ENCODE measurements at regions of chr2 and their contacts with region 1.

Region 1: DNA sequence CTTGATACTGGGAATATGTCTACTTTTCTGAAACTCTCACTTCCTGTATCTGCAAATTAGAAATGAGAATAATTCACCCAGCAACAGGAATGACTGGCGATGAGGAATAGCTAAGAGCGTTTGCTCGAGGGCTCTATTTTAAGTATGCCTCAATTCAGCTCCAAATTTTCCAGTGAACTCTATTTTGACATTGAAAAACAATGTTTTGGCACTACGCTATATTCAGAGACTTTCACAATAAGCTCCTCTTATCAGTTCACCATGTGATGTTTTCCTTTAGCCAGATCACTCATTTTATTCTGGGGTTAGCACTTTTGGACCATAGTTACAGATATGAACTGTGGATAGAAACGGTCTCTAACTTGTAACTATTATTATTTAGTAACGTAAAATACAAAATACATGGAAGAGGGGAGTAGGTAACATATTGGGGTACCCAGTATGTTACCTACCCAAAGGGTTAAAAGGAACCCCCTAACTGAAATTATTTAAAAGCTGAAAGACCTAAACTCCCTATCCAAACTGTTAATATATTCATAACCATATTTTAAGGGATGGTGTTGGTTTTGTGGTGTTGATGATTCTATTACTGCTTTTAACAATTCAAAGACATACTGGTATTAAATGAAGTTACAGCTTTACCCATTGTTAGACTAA is 28.1 kb downstream of the SLC40A1 start:
- DNase-seq: no peak
- H3K4me3 Mint-ChIP-seq: no peak overlapping the region
- H3K27ac Mint-ChIP-seq: no peak overlapping the region
- H3K4me1 Mint-ChIP-seq: peaks cover 58% of the 10 kb centered on the region
- H3K27me3 Mint-ChIP-seq: no peaks in the 10 kb centered on the region
- CTCF ChIP-seq: no peak

Region 2: DNA sequence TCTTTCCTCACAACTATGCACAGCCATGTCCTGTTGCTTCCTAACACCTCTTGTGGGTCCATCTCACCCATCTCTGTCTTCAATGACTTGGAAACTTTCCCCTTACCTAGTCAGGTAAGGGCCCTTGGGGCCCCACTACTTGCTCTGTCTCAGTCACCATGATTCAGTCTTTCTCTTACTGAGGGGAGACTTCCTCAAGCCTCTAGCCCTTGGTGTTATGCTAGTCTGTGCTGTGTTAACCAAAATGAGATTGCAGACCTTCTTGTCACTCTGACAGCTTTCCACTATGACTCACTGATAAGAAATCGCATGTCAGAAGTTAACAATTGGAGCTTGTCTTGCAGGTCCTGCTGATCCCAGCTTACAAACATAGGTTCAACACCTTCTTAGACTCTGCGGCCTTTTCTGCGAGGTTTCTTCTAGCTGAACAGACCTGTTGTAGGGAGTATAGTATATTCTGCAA is 45.9 kb before region 1 on chr2:
- CTCF ChIA-PET with region 1: no interaction called
- intact Hi-C with region 1: loop called (anchors 2 kb)
- DNase-seq: peak; percentile 36
- H3K4me3 Mint-ChIP-seq: no peak overlapping the region
- H3K27ac Mint-ChIP-seq: peak overlapping the region; percentile 71
- H3K4me1 Mint-ChIP-seq: peaks cover 24% of the 10 kb centered on the region
- H3K27me3 Mint-ChIP-seq: no peaks in the 10 kb centered on the region
- CTCF ChIP-seq: no peak

Region 3: GRCh38 chr2:189521699-189522434 is 30.6 kb before region 1 on chr2:
- CTCF ChIA-PET with region 1: no interaction called
- intact Hi-C with region 1: loop called (anchors 2 kb)
- DNase-seq: no peak
- H3K4me3 Mint-ChIP-seq: peak overlapping the region; percentile 35
- H3K27ac Mint-ChIP-seq: peak overlapping the region; percentile 72
- H3K4me1 Mint-ChIP-seq: peaks cover 25% of the 10 kb centered on the region
- H3K27me3 Mint-ChIP-seq: no peaks in the 10 kb centered on the region
- CTCF ChIP-seq: no peak

Region 4: GRCh38 chr2:189579592-189580186 is 27.2 kb after region 1 on chr2:
- CTCF ChIA-PET with region 1: interaction called, 4 read pairs
- intact Hi-C with region 1: loop called (anchors 2 kb)
- DNase-seq: peak; percentile 22
- H3K4me3 Mint-ChIP-seq: peak overlapping the region; percentile 98
- H3K27ac Mint-ChIP-seq: peak overlapping the region; percentile 93
- H3K4me1 Mint-ChIP-seq: peaks cover 73% of the 10 kb centered on the region
- H3K27me3 Mint-ChIP-seq: no peaks in the 10 kb centered on the region
- CTCF ChIP-seq: no peak

Region 5: DNA sequence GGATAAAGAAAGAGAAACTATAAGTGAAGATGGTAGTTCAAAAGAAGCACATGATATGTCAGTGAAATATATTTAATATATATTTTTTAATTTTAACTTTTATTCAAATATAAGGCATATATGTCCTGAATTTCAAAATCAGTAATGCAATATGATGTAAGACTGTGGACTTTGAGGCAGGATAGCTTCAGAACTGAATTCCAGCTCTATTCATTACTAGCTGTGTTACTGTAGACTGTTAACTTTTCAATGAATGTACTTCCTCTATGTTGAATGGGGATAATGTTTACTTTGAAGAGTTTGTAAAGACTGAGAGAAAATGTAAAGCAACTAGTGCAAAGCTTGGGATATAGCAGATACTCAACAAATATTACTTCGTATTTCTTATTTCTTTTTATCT is 344.3 kb after region 1 on chr2:
- CTCF ChIA-PET with region 1: no interaction called
- intact Hi-C with region 1: no loop called
- DNase-seq: no peak
- H3K4me3 Mint-ChIP-seq: no peak overlapping the region
- H3K27ac Mint-ChIP-seq: no peak overlapping the region
- H3K4me1 Mint-ChIP-seq: no peaks in the 10 kb centered on the region
- H3K27me3 Mint-ChIP-seq: no peaks in the 10 kb centered on the region
- CTCF ChIP-seq: no peak